ENCODE measurements at regions of chr16 and their contacts with region 1.

Region 1: DNA sequence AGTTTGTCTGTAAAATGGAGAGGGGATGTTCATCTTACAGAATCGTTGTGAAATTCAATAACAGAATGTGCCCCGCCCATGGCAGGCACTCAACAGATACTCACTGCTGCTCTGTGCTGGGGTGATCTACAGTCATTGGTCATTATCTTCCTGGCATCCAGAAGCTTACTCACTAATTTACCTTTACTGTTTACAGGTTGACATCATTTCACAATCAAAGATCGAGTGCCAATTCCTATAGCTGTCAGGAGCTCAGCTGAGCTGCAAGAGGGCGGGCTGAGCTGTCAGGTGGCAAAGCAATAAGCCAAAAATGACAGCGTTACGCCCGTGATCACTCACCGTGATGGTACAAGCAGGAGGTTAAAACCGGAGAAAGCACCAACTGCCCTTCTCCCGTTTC is 51.2 kb downstream of the LITAF start:
- DNase-seq: no peak
- H3K4me3 Mint-ChIP-seq: no peak overlapping the region
- H3K27ac Mint-ChIP-seq: no peak overlapping the region
- H3K4me1 Mint-ChIP-seq: peaks cover 8% of the 10 kb centered on the region
- H3K27me3 Mint-ChIP-seq: peaks cover 2% of the 10 kb centered on the region

Region 2: GRCh38 chr16:11396241-11397048 is 139.0 kb before region 1 on chr16:
- intact Hi-C with region 1: loop called (anchors 1 kb)
- DNase-seq: peak; percentile 40
- H3K4me3 Mint-ChIP-seq: no peak overlapping the region
- H3K27ac Mint-ChIP-seq: no peak overlapping the region
- H3K4me1 Mint-ChIP-seq: no peaks in the 10 kb centered on the region
- H3K27me3 Mint-ChIP-seq: peaks cover 3% of the 10 kb centered on the region

Region 3: DNA sequence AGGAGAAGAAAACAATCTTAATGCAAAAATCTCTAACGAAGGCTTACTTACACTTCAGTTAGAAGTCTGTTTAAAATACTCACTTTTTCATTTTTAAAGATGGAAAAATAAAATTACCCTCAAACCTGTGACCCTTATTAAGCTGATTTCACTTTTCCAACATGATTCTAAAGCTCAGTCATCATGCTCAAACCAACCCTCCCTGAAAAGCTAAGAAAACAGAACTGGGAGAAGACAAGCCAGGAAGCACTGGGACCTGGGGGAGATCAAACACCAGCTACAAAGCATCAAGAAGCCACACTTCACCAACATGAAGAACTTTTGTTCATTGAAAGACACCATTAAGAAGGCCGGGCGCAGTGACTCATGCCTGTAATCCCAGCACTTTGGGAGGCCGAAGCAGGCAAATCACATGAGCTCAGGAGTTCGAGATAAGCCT is 37.6 kb before region 1 on chr16:
- intact Hi-C with region 1: no loop called
- DNase-seq: no peak
- H3K4me3 Mint-ChIP-seq: no peak overlapping the region
- H3K27ac Mint-ChIP-seq: no peak overlapping the region
- H3K4me1 Mint-ChIP-seq: peaks cover 6% of the 10 kb centered on the region
- H3K27me3 Mint-ChIP-seq: no peaks in the 10 kb centered on the region

Region 4: GRCh38 chr16:11560701-11561449 is 25.4 kb after region 1 on chr16:
- intact Hi-C with region 1: loop called (anchors 1 kb)
- DNase-seq: peak; percentile 66
- H3K4me3 Mint-ChIP-seq: peak overlapping the region; percentile 81
- H3K27ac Mint-ChIP-seq: peak overlapping the region; percentile 95
- H3K4me1 Mint-ChIP-seq: peaks cover 79% of the 10 kb centered on the region
- H3K27me3 Mint-ChIP-seq: no peaks in the 10 kb centered on the region

Region 5: GRCh38 chr16:11715246-11715947 is 179.9 kb after region 1 on chr16:
- intact Hi-C with region 1: loop called (anchors 1 kb)
- DNase-seq: no peak
- H3K4me3 Mint-ChIP-seq: no peak overlapping the region
- H3K27ac Mint-ChIP-seq: peak overlapping the region; percentile 13
- H3K4me1 Mint-ChIP-seq: peaks cover 16% of the 10 kb centered on the region
- H3K27me3 Mint-ChIP-seq: no peaks in the 10 kb centered on the region

Region 6: GRCh38 chr16:12067714-12068401 is 532.4 kb after region 1 on chr16:
- intact Hi-C with region 1: loop called (anchors 1 kb)
- DNase-seq: peak; percentile 40
- H3K4me3 Mint-ChIP-seq: no peak overlapping the region
- H3K27ac Mint-ChIP-seq: no peak overlapping the region
- H3K4me1 Mint-ChIP-seq: no peaks in the 10 kb centered on the region
- H3K27me3 Mint-ChIP-seq: no peaks in the 10 kb centered on the region

Measured in activated T-helper 1 cell treated with anti-CD3 and anti-CD28 coated beads, Interleukin-12 subunit alpha, Interleukin-12 subunit beta, Interleukin-2, Interleukin-4 antibody, amounts not matched to agents 30 ng/mL and 10 ng/mL and 1 ng/mL, durations not matched to agents 14 hours and 24 hours and 36 hours (primary cell).